ENCODE measurements at regions of chr3 and their contacts with region 1.

Region 1: GRCh38 chr3:9792405-9793160 is at the starts of genes ARPC4 and TADA3:
- DNase-seq: peak; percentile 95
- ATAC-seq: peak; percentile 79
- H3K4me3 Mint-ChIP-seq: peak within 1 kb of the TSS; percentile 99
- H3K27ac Mint-ChIP-seq: peak within 1 kb of the TSS; percentile 100
- H3K4me1 Mint-ChIP-seq: peaks cover 73% of the 10 kb centered on the region
- H3K27me3 Mint-ChIP-seq: no peaks in the 10 kb centered on the region
- total RNA-seq, gene ARPC4: 164 to 231 TPM
- total RNA-seq, gene TADA3: 80.7 to 96.4 TPM

Region 2: GRCh38 chr3:9362731-9363530 is 429.7 kb before region 1 on chr3 and contains the start of gene THUMPD3:
- CTCF ChIA-PET with region 1: no interaction called
- POLR2A ChIA-PET with region 1: interaction called, 3 read pairs
- intact Hi-C with region 1: loop called in 1 of 2 experiments (anchors 2 kb)
- DNase-seq: peak; percentile 96
- ATAC-seq: peak; percentile 93
- H3K4me3 Mint-ChIP-seq: peak within 1 kb of the TSS; percentile 98
- H3K27ac Mint-ChIP-seq: peak within 1 kb of the TSS; percentile 100
- H3K4me1 Mint-ChIP-seq: peaks cover 21% of the 10 kb centered on the region
- H3K27me3 Mint-ChIP-seq: no peaks in the 10 kb centered on the region
- total RNA-seq, gene THUMPD3: 59.6 to 74.3 TPM

Region 3: GRCh38 chr3:9749645-9750555 is 42.7 kb before region 1 on chr3 and contains the start of gene OGG1:
- CTCF ChIA-PET with region 1: interaction called, 4 read pairs
- POLR2A ChIA-PET with region 1: interaction called, 6 read pairs
- intact Hi-C with region 1: loop called (anchors 1 kb)
- DNase-seq: peak; percentile 98
- ATAC-seq: peak; percentile 94
- H3K4me3 Mint-ChIP-seq: peak within 1 kb of the TSS; percentile 87
- H3K27ac Mint-ChIP-seq: peak within 1 kb of the TSS; percentile 91
- H3K4me1 Mint-ChIP-seq: peaks cover 46% of the 10 kb centered on the region
- H3K27me3 Mint-ChIP-seq: no peaks in the 10 kb centered on the region
- total RNA-seq, gene OGG1: 36.4 to 61.6 TPM

Region 4: GRCh38 chr3:9809615-9810432 is 17.2 kb after region 1 on chr3 and contains the start of gene TTLL3:
- CTCF ChIA-PET with region 1: interaction called, 8 read pairs
- POLR2A ChIA-PET with region 1: interaction called, 5 read pairs
- intact Hi-C with region 1: loop called (anchors 1 kb)
- DNase-seq: peak; percentile 64
- ATAC-seq: peak; percentile 34
- H3K4me3 Mint-ChIP-seq: peak within 1 kb of the TSS; percentile 75
- H3K27ac Mint-ChIP-seq: peak within 1 kb of the TSS; percentile 94
- H3K4me1 Mint-ChIP-seq: peaks cover 34% of the 10 kb centered on the region
- H3K27me3 Mint-ChIP-seq: no peaks in the 10 kb centered on the region
- total RNA-seq, gene TTLL3: 47.5 to 49.8 TPM

Region 5: DNA sequence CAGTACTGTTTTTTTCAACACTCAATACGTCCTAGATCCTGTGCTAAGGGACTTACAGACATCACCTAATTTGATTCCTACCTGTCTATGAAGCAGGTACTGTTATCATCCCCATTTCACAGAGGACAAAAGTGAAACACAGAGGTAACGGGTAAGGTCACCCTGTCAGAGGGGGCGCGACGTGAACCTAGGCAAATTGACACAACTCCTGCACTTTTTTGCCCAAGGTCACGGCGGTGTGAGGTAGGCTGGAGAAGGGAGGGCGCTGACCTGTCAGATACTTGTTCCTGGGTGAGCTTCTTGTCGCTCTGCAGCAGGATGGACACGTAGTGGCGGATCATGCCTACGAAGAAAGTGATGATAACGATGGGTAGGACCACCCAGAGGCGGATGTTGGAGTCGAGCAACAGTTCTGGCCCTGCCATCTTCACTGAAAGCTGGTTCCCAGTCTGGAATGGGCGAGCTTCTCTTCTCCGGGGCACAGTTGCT is 193.7 kb after region 1 on chr3:
- CTCF ChIA-PET with region 1: no interaction called
- POLR2A ChIA-PET with region 1: interaction called, 9 read pairs
- intact Hi-C with region 1: loop called in 1 of 2 experiments (anchors 1 kb)
- DNase-seq: no peak
- ATAC-seq: peak; percentile 31
- H3K4me3 Mint-ChIP-seq: peak overlapping the region; percentile 94
- H3K27ac Mint-ChIP-seq: peak overlapping the region; percentile 98
- H3K4me1 Mint-ChIP-seq: peaks cover 32% of the 10 kb centered on the region
- H3K27me3 Mint-ChIP-seq: no peaks in the 10 kb centered on the region

Region 6: DNA sequence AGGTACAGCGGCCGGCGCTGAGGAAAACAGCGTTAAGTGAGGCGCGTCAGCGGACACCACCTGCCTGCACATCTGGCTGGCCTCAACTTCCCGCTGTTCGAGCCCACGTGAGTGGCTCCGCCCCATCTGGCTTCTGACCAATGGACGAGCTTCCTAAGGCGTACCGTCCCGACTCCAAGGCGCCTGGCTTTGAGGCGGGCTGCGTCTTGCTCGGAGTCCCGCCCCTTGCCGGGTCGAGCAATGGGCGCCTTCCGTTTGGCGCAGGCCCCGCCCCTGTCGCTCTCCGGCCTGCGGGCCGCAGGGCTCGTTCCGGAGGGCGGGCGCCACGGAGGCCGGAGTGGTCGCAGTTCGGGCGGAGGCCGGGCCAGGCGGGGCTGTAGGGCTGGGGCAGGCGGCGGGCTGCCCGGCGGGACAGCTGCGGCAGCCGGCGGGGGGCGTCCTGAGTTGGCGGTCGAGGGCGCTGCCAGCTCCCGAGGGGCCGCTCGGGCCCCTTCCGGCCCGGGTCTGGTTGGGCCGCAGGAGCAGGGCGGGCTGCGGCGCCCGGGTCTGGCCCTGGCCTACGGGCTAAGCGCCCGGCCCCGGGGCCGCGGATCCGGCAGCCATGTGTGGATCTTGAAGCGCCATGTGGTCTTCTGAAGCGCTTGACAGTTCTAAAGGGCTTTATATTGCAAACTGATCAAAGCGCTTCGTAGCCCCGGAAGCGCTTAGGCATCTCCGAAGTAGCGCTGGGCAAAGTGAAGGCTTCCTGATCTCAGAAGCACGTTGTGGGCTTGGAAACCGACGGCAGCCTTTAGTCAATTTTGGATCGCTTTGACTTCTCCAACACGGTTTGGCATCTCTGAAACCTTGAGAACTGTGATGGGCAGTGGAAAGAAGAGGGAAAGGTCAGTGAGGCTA is 455.8 kb after region 1 on chr3 and contains the start of gene TATDN2:
- CTCF ChIA-PET with region 1: no interaction called
- POLR2A ChIA-PET with region 1: no interaction called
- intact Hi-C with region 1: loop called in 1 of 2 experiments (anchors 1 kb)
- DNase-seq: peak; percentile 97
- ATAC-seq: peak; percentile 94
- H3K4me3 Mint-ChIP-seq: peak within 1 kb of the TSS; percentile 97
- H3K27ac Mint-ChIP-seq: peak within 1 kb of the TSS; percentile 96
- H3K4me1 Mint-ChIP-seq: peaks cover 63% of the 10 kb centered on the region
- H3K27me3 Mint-ChIP-seq: no peaks in the 10 kb centered on the region
- total RNA-seq, gene TATDN2: 40.0 to 40.2 TPM

Measured in activated CD4-positive, alpha-beta T cell treated with anti-CD3 and anti-CD28 coated beads for 36 hours (primary cell).